Stomach (tissue), 19 donors: ENCODE measurements at regions of chrX and their contacts with region 1.

Region 1: GRCh38 chrX:16719334-16720084 is at the start of gene SYAP1:
- DNase-seq: peak; percentile 99
- H3K4me3 ChIP-seq: peak within 1 kb of the TSS; percentile 54 to 82 (median 72)
- H3K27ac ChIP-seq: peak within 1 kb of the TSS; percentile 88 to 98 (median 95)
- H3K4me1 ChIP-seq: peaks cover 0 to 41% (median 33%) of the 10 kb centered on the region in 4 donors
- H3K27me3 ChIP-seq: peaks cover 0 to 5% (median 0%) of the 10 kb centered on the region in 3 donors
- CTCF ChIP-seq: no peak
- EP300 ChIP-seq: peak; percentile 48
- POLR2A ChIP-seq: peak in 2 of 4 donors; percentile 73 to 93
- total RNA-seq, gene SYAP1: 20.1 to 43.2 (median 37.6) TPM

Region 2: DNA sequence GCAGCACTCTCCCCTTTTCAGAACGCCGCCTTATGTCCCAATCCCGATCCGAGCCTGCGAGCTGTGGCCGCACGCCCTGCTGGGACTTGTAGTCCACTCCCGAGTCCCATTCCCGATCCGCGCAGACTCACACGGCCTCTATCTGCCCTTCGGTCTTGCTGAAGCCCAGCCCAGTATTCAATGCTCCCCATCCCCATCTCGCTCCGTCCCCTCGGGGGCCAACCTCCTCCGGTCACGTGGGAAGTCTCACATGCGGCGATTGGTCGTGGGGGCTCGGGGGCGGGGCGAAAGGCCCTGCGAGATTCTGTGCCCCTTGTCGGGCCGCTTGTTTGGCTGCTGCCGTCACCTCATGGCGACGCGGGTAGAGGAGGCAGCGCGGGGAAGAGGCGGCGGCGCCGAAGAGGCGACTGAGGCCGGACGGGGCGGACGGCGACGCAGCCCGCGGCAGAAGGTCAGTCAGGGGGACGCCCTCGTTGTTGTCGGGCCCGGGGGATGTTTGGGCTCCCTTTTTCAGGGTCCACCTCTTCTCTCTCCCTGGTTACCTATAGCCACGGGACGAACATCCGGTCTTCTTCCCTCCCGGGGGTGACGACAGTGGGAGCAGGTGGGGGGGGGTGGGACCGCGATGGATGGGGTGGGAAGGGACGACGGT is 66.8 kb after region 1 on chrX and contains the start of gene TXLNG:
- intact Hi-C with region 1: loop called (anchors 10 kb)
- DNase-seq: peak; percentile 99 to 100
- H3K4me3 ChIP-seq: peak within 1 kb of the TSS; percentile 71 to 95 (median 82)
- H3K27ac ChIP-seq: peak within 1 kb of the TSS; percentile 87 to 93 (median 91)
- H3K4me1 ChIP-seq: peaks cover 0 to 38% (median 17%) of the 10 kb centered on the region in 4 donors
- H3K27me3 ChIP-seq: no peaks in the 10 kb centered on the region
- CTCF ChIP-seq: no peak
- EP300 ChIP-seq: no peak
- POLR2A ChIP-seq: peak in 1 of 4 donors; percentile 57
- total RNA-seq, gene TXLNG: 8.7 to 25.7 (median 11.4) TPM